ENCODE measurements at regions of chr5 and their contacts with region 1.

Region 1: DNA sequence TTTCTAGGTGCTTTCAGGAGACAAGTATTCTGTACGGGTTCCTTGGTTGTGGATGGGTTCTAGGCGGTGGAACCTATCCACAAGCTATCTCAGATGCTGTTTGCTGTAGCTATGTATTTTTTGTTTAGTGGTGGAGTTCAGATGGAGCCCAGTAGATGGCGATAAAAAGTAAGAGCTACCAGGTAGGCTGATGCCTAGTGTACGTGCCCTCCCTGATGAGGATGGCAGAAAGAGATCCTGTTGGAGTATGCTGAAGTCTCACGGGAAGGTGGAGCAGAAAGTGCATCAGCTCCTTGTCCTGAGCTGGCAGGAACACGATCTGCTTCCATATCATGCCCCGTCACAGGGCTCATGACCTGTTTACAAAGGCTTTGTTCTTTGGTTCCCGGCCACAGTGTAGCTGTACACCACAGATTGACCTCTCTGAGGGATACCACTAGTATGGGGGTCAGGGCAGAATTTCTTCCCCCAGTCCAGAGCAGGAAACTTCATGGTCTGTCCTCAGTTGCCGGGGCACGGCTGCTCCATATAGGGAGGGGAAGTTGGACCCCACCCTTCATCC is 12.6 kb upstream of the UGT3A2 start:
- DNase-seq: peak; percentile 44 to 53
- H3K4me3 ChIP-seq: no peak overlapping the region
- H3K27ac ChIP-seq: no peak overlapping the region
- H3K4me1 ChIP-seq: no peaks in the 10 kb centered on the region
- H3K27me3 ChIP-seq: peaks cover 3% of the 10 kb centered on the region; the same call in 1 of the 2 replicates
- CTCF ChIP-seq: peak; percentile 88

Region 2: DNA sequence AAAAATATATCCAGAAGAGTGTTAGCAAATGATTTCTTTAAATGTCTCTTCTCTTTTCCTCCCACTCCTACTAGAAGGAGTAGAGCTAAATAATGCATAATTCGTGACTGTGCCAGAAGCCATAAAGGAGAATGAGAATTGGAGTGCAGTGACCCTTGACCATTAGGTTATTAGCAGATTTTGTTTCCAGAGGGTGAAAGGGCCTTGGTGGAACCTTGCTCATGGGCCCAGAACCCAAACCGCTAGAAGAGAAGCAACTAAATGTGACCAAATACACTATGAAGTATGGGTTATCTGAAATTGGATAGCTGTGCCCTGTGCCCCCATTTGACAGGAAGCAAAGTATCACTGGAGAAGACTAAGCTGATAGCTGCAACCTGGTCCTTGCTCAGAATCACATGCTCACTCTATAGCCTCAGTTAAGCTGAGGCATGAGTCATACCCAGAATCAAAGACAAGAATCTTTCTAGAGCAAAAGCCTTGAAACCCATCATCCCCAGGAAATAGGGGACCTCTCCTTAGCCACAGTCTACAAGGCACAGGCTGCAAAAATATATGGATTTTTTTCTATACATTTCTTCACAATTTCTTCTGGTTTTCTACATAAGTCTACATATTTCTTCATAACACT is 177.1 kb before region 1 on chr5:
- CTCF ChIA-PET with region 1: no interaction called
- POLR2A ChIA-PET with region 1: no interaction called
- intact Hi-C with region 1: no loop called
- DNase-seq: no peak
- H3K4me3 ChIP-seq: no peak overlapping the region
- H3K27ac ChIP-seq: no peak overlapping the region
- H3K4me1 ChIP-seq: no peaks in the 10 kb centered on the region
- H3K27me3 ChIP-seq: no peaks in the 10 kb centered on the region
- CTCF ChIP-seq: no peak

Region 3: DNA sequence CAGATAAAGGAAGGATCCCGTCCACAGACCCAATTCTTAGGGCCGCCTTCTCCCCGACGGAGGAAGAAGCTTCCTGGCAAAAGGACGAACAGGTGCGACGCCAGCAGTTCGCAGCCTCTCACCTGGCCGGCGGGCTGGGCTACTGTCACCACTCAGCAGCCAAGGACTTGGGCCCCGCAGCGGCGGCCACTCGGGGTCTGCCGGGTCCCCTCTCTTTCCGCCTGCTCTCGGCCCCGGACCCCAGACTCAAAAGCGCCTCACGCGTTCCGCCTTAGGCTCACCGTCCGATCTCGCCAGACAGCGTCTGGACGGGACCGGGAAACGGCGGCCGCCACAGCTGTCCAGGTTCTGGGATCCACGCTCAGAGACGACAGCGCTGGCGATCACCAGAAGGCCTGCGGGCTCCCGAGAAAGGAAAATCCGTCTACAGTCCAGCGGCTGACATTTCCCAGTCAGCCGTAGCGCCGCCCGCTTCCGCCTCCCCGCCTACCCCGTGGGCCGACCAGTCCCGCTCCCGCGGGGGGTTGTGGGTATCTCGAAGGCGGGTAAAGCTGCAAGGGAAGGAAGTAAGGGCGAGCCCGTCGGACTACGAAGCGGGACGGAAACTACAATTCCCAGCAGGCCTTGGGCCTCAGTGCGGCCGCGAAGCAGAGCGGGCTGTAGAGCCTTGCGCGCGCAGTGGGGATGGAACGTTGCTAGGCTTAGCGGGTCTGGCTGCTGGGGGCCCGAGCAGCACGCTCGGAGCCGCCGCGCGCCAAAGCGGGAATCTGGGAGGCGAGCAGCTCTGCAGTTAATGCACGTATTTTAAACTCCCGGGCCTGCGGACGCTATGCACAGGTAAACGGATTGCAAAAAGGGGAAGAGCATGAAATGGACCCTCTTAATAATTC is 72.4 kb after region 1 on chr5 and contains the starts of genes LMBRD2 and SKP2:
- CTCF ChIA-PET with region 1: interaction called, 16 read pairs
- POLR2A ChIA-PET with region 1: no interaction called
- intact Hi-C with region 1: no loop called
- DNase-seq: peak; percentile 98 to 100
- H3K4me3 ChIP-seq: peak within 1 kb of the TSS; percentile 90
- H3K27ac ChIP-seq: peak within 1 kb of the TSS; percentile 38
- H3K4me1 ChIP-seq: peaks cover 17% of the 10 kb centered on the region
- H3K27me3 ChIP-seq: no peaks in the 10 kb centered on the region
- CTCF ChIP-seq: no peak
- total RNA-seq, gene LMBRD2: 8.5 and 18.0 TPM in 2 replicates
- total RNA-seq, gene SKP2: 121 and 153 TPM in 2 replicates

Region 4: DNA sequence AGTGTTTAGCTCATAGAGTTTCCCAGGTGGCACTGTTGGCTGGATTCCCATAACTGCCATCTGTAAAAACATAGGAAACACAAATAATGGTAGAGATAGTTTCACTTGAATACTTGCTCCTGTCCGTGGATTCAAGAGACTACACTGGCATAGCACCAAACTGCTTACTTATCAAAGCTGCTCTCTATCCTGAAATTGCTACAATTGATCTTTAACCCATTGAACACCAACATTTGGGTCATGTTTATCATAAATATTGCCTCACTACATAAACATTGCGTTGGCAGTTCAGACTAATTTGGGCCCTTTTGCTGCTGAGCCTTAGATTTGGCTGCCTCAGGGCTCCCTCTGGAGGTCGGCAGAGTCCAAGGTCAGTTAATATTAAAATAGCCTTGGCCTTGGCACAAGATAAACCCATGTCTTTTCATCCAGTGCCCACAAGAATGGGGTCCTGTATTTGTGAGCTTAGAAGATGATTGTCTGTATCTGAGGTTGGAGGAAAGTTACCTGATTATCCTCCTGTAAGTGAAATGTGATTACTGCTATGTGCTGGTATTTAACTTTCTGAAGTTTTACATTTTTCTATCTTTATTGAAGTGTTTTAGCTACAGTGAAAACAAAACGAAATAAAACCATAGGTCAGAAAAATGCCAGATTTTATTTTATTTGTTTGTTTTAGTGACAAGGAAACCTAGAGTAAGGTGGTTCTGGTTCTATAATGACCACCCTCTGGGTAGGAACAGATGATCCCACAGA is 226.5 kb after region 1 on chr5:
- CTCF ChIA-PET with region 1: interaction called, 15 read pairs
- POLR2A ChIA-PET with region 1: no interaction called
- intact Hi-C with region 1: loop called (anchors 1 kb)
- DNase-seq: peak; percentile 48 to 52
- H3K4me3 ChIP-seq: no peak overlapping the region
- H3K27ac ChIP-seq: no peak overlapping the region
- H3K4me1 ChIP-seq: 0 out of 2 replicates have a peak, but pooled peaks cover 4% of the 10 kb centered on the region
- H3K27me3 ChIP-seq: no peaks in the 10 kb centered on the region
- CTCF ChIP-seq: peak; percentile 83

Region 5: DNA sequence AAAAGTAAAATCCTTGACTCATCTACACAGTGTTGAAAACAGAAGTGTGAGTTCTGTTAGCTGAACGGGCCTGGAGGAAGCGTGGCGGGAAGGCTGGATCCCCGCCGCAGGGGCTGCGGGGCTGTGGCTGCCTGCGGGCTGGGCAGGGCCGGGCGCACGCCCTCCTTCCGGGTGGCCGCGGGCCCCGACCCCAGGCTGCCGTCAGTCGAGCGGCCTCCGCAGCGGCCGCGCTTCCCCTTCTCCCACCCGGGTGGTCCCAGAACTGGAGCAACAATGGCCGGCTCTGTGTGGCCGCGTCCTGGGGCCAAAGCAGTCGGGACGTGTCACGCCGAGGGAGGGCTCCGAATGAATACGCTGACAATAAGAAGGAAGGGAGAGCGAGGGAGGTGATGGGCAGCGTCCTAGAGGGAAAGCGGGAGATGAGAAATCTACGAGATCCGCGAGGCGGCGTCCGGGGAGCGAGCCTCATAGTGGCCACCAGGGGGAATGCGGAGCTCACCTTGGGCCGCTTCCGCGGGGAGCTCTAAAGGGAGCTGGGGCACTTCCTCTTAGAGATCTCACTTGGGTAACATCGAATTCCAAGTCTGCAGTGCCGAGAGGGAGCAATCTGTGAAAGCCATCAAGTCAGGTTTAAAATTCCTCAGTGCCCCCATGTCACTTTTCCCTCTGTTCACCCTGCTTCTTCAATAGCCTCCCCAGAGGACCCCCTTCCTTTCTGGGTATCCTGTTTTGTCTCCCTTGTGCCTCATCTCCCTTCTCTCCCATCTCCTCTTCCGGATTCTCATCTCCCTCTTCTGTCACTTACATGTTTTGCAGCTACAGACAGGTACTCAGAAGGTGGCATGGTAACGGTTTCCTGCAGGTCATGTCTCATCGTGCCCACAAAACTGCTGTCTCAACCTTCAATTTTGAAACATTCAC is 611.0 kb after region 1 on chr5:
- CTCF ChIA-PET with region 1: interaction called, 4 read pairs
- POLR2A ChIA-PET with region 1: no interaction called
- intact Hi-C with region 1: loop called (anchors 1 kb)
- DNase-seq: peak; percentile 25 to 56
- H3K4me3 ChIP-seq: no peak overlapping the region
- H3K27ac ChIP-seq: no peak overlapping the region
- H3K4me1 ChIP-seq: peaks cover 5% of the 10 kb centered on the region; the same call in 1 of the 2 replicates
- H3K27me3 ChIP-seq: no peaks in the 10 kb centered on the region
- CTCF ChIP-seq: no peak

Measured in PC-9 (cell line).